Activated naive CD4-positive, alpha-beta T cell treated with anti-CD3 and anti-CD28 coated beads, Interleukin-2, amount 10 ng/mL, durations not matched to agents 7 days and 5 days (primary cell): ENCODE measurements at regions of chr4 and their contacts with region 1.

Region 1: DNA sequence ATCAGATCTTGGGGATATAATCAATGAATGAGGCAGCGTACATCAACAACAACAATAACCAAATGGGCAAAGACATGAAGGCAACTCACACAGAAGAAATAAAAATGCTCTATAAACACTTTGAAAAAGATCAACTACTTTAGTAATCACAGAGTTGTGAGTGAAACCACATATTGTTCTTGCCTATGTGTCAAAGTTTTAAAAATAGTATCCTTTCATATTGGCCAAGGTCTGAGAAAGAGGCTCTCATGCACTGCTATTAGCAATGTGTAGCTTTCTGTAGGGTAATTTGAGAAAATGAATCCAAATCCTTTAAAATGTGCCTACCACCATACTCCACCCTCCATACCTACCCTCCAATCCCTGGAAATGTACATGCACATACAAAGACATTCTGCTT is 25.0 kb downstream of the COQ2 start:
- DNase-seq: no peak
- H3K4me3 Mint-ChIP-seq: no peak overlapping the region
- H3K27ac Mint-ChIP-seq: no peak overlapping the region
- H3K4me1 Mint-ChIP-seq: peaks cover 18% of the 10 kb centered on the region
- H3K27me3 Mint-ChIP-seq: no peaks in the 10 kb centered on the region

Region 2: GRCh38 chr4:83083925-83084475 is 175.6 kb before region 1 on chr4:
- CTCF ChIA-PET with region 1: interaction called, 10 read pairs
- DNase-seq: peak; percentile 80
- H3K4me3 Mint-ChIP-seq: no peak overlapping the region
- H3K27ac Mint-ChIP-seq: peak overlapping the region; percentile 91
- H3K4me1 Mint-ChIP-seq: peaks cover 53% of the 10 kb centered on the region
- H3K27me3 Mint-ChIP-seq: no peaks in the 10 kb centered on the region